GM10248 (cell line): ENCODE measurements at regions of chr5 and their contacts with region 1.

Region 1: GRCh38 chr5:74673011-74673790 is 11.8 kb upstream of the HEXB start:
- DNase-seq: no peak
- CTCF ChIP-seq: peak; percentile 13

Region 2: DNA sequence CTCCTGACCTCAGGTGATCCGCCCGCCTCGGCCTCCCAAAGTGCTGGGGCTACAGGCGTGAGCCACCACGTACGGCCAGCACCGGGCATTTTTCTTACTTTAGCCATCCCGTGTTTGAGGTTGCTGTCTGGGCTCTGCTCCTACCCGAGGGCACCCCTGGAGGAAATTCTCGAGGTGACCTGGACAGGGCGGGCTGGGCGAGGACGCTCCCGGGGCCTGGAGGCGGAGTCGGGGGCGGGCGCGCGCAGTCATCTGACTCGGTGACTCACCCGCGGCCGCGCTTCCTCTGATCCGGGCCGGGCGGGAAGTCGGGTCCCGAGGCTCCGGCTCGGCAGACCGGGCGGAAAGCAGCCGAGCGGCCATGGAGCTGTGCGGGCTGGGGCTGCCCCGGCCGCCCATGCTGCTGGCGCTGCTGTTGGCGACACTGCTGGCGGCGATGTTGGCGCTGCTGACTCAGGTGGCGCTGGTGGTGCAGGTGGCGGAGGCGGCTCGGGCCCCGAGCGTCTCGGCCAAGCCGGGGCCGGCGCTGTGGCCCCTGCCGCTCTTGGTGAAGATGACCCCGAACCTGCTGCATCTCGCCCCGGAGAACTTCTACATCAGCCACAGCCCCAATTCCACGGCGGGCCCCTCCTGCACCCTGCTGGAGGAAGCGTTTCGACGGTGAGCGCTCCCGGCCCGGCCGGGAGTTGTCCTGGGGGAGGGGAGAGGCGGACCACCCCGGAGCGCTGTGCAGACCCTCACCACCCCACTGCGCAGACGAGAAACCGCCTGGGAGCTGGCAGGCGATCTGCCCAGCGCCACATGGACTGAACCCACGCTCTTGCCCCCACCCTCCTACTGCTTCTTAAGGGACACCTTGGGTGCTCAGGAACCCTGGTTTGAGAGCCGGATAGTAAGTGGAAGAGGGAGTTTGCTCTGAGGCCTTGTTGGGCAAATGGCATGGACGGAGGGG is 12.0 kb after region 1 on chr5 and contains the start of gene HEXB:
- CTCF ChIA-PET with region 1: interaction called, 16 read pairs
- POLR2A ChIA-PET with region 1: no interaction called
- DNase-seq: peak; percentile 87
- CTCF ChIP-seq: no peak

Region 3: DNA sequence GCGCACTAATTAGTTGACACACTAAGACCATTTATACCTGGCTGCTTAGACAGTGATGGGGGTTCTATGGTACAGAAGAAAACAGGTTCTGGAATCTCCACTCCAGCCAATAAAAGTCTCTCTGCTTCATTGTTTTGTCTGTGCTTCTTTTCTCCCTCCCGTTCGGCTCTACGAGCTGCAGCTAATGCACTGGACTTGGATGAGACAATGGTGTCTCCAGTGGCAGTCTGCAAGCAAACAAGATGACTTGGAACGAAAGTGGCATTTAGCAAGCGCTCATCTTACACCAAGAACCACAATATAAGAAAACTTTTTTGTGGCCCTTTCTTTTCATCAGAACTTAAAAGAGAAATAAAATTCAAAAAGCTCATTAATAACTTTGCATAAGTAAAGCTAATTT is 63.6 kb after region 1 on chr5:
- CTCF ChIA-PET with region 1: no interaction called
- POLR2A ChIA-PET with region 1: no interaction called
- DNase-seq: no peak
- CTCF ChIP-seq: no peak

Region 4: DNA sequence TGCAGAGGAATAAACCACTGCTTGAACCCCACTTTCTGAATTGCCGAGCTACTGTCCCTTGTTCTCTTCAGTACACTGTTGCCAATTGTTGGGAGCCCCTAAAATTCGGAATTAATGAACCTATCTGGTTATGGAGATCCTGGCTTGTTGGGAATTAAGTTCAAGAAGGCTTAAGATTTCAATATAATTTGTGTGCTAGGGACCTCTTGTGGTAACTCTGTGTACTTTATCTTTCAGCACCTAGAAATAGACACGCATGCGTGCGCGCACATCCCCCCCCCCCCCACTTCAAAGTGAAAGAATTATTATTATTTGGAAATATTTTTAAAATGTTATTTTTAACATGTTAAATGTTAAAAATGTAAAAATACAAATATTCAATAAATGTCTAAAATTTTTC is 246.3 kb after region 1 on chr5:
- CTCF ChIA-PET with region 1: interaction called, 13 read pairs
- POLR2A ChIA-PET with region 1: no interaction called
- DNase-seq: peak; percentile 44
- CTCF ChIP-seq: peak; percentile 38